ENCODE measurements at regions of chr5 and their contacts with region 1.

Region 1: DNA sequence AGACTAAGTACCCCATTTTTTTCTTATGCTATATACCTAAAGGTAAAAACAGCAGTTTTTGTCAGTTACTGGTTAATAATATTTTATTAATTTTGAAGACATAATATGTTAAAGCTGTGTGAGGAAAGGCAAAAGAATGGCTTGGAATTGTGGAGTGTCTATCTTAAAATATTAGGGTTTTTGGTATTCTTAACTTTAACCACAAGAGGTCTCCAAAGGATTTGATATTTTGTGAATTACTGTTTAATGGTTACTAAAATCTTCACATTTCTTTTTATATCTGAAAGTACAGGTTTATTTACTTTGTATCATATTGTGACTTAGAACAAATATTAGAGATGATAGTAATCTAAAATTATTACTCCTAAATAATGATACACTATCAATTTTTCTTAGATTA is 32.0 kb upstream of the DHFR start:
- DNase-seq: no peak
- H3K4me3 Mint-ChIP-seq: no peak overlapping the region
- H3K27ac Mint-ChIP-seq: no peak overlapping the region
- H3K4me1 Mint-ChIP-seq: peaks cover 20% of the 10 kb centered on the region
- H3K27me3 Mint-ChIP-seq: no peaks in the 10 kb centered on the region

Region 2: DNA sequence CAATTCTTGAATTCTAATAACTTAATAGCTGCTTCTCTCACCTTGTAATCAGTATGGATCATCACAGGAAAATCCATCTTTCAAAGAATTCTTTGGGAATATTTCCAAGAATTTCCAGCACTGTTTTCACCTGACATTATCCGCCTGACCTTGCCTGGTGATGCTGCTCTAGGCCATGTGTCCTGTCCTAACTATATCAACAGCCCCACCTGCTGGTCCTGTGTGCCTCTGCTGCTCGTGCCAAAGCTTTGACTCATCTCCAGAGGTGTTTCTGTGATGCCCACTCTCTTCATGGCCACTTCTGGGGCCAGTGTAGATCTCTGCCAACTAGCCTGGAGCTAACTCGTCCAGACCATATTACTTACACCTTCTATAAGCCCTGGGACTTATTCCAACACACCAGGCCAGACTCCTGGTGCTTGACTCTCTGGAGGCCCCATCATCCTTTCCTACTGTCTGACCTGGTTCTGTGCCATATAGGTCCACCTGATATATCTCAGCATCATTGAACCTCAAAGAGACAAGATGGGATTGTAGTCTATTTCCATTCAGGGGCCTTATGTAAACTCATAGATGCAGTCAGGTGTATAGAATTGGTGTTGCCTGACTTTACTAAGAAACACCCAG is 478.8 kb after region 1 on chr5:
- intact Hi-C with region 1: loop called (anchors 1 kb)
- DNase-seq: peak; percentile 89
- H3K4me3 Mint-ChIP-seq: no peak overlapping the region
- H3K27ac Mint-ChIP-seq: no peak overlapping the region
- H3K4me1 Mint-ChIP-seq: peaks cover 9% of the 10 kb centered on the region
- H3K27me3 Mint-ChIP-seq: no peaks in the 10 kb centered on the region

Region 3: GRCh38 chr5:81194633-81195333 is 508.0 kb after region 1 on chr5:
- intact Hi-C with region 1: loop called (anchors 2 kb)
- DNase-seq: peak; percentile 94
- H3K4me3 Mint-ChIP-seq: peak overlapping the region; percentile 24
- H3K27ac Mint-ChIP-seq: no peak overlapping the region
- H3K4me1 Mint-ChIP-seq: peaks cover 4% of the 10 kb centered on the region
- H3K27me3 Mint-ChIP-seq: no peaks in the 10 kb centered on the region

Measured in activated CD4-positive, alpha-beta T cell treated with anti-CD3 and anti-CD28 coated beads, Interleukin-2, amount 10 ng/mL, durations not matched to agents 24 days and 14 days (primary cell).